ENCODE measurements at regions of chr4 and their contacts with region 1.

Region 1: GRCh38 chr4:113468165-113469022 is 293.1 kb downstream of the CAMK2D start:
- DNase-seq: peak; percentile 88

Region 2: DNA sequence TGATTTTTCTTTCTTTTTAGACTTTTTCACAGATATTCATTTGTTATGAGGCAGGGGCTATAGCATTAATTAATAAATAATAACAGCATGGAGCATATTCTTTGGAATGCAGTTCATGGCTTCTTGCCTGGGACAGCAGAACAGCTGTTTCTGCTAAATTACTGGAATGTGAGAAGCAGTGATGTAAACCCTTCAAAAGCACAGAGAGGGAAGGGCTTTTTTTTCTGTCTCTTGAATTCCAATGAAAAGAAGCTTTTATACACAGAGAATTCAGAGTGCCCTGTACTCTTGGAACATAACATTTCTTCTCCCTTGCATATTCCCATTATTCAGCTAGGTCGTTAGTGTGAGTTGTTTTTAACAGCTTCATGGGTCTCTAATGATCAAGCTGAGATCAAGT is 447.4 kb before region 1 on chr4:
- intact Hi-C with region 1: no loop called
- DNase-seq: no peak

Region 3: GRCh38 chr4:113411496-113411938 is 56.9 kb before region 1 on chr4:
- intact Hi-C with region 1: no loop called
- DNase-seq: no peak

Region 4: GRCh38 chr4:113445286-113445685 is 23.1 kb before region 1 on chr4:
- intact Hi-C with region 1: loop called (anchors 2 kb)
- DNase-seq: no peak

Region 5: DNA sequence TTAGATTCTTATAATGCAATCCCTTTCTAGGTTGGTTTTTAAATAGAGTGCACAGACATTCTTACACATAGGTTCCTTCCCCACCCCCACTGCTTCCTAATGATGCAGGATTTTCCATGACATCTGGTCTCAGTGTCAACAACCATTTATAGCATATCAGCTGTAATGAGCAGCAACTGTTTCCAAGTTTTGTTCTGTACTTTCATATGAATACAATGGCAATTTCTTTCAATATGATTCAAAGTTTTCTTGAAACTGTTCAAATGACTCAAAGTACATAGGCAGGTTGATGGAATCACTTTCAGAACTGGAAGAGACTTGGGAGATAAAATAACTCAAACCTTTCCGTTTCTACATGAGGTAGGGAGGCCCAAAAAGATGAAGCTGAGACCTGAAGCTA is 72.5 kb after region 1 on chr4:
- intact Hi-C with region 1: loop called (anchors 2 kb)
- DNase-seq: no peak